ENCODE measurements at regions of chr4 and their contacts with region 1.

Region 1: DNA sequence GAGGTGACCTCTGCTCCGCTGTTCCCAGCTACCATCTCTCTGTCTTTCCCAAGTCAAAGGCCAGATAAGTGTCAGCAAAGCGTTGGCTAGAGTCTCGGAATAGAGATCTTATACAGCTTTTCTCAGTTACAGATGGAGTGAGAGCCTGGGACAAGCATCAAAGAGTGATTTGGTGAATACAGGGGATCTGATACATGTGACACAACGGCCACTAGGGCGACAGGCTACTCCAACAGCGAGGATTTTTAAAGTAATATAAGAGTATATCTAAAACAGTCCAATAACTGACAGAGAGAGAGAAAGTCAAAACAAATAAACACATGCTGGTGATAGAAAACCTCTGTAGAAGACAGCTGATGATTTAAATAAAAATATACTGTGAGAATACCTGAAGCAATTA is 433.1 kb upstream of the SMIM31 start:
- DNase-seq: no peak
- ATAC-seq: no peak
- H3K4me3 ChIP-seq: no peak overlapping the region
- H3K27ac ChIP-seq: no peak overlapping the region
- H3K4me1 ChIP-seq: no peaks in the 10 kb centered on the region
- H3K27me3 ChIP-seq: no peaks in the 10 kb centered on the region
- CTCF ChIP-seq: no peak
- EP300 ChIP-seq: no peak
- POLR2A ChIP-seq: no peak
- RAD21 ChIP-seq: no peak

Region 2: DNA sequence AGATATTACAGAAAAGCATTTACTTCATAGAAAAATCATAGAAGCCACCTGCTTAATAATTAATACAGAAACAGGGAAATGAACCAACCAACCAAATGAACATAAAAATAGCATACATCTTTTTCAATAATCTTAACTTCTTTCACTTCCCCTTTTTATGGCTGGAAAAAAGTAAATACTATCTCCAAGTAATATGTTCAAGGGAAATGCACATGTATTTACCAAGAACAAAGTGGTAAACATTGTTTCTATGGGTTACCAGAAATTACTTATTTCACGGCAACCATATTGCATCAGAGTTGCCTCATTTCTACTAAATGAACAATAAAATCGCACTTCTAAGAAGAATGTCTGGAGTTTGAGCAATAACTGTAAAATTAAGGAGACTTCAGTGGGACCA is 505.1 kb before region 1 on chr4:
- CTCF ChIA-PET with region 1: no interaction called
- POLR2A ChIA-PET with region 1: no interaction called
- in situ Hi-C with region 1: no loop called
- intact Hi-C with region 1: loop called (anchors 5 kb)
- DNase-seq: no peak
- ATAC-seq: no peak
- H3K4me3 ChIP-seq: no peak overlapping the region
- H3K27ac ChIP-seq: no peak overlapping the region
- H3K4me1 ChIP-seq: no peaks in the 10 kb centered on the region
- H3K27me3 ChIP-seq: no peaks in the 10 kb centered on the region
- CTCF ChIP-seq: no peak
- EP300 ChIP-seq: no peak
- POLR2A ChIP-seq: no peak
- RAD21 ChIP-seq: no peak

Region 3: GRCh38 chr4:163991298-163991865 is 329.5 kb before region 1 on chr4:
- CTCF ChIA-PET with region 1: no interaction called
- POLR2A ChIA-PET with region 1: no interaction called
- in situ Hi-C with region 1: no loop called
- intact Hi-C with region 1: no loop called
- DNase-seq: no peak
- ATAC-seq: no peak
- H3K4me3 ChIP-seq: no peak overlapping the region
- H3K27ac ChIP-seq: no peak overlapping the region
- H3K4me1 ChIP-seq: no peaks in the 10 kb centered on the region
- H3K27me3 ChIP-seq: no peaks in the 10 kb centered on the region
- CTCF ChIP-seq: no peak
- EP300 ChIP-seq: no peak
- POLR2A ChIP-seq: no peak
- RAD21 ChIP-seq: no peak

Region 4: GRCh38 chr4:164484551-164484950 is 163.7 kb after region 1 on chr4:
- CTCF ChIA-PET with region 1: no interaction called
- POLR2A ChIA-PET with region 1: no interaction called
- in situ Hi-C with region 1: no loop called
- intact Hi-C with region 1: no loop called
- DNase-seq: no peak
- ATAC-seq: no peak
- H3K4me3 ChIP-seq: no peak overlapping the region
- H3K27ac ChIP-seq: no peak overlapping the region
- H3K4me1 ChIP-seq: no peaks in the 10 kb centered on the region
- H3K27me3 ChIP-seq: no peaks in the 10 kb centered on the region
- CTCF ChIP-seq: no peak
- EP300 ChIP-seq: no peak
- POLR2A ChIP-seq: no peak
- RAD21 ChIP-seq: no peak

Measured in K562 (cell line).